ENCODE measurements at regions of chr13 and their contacts with region 1.

Region 1: DNA sequence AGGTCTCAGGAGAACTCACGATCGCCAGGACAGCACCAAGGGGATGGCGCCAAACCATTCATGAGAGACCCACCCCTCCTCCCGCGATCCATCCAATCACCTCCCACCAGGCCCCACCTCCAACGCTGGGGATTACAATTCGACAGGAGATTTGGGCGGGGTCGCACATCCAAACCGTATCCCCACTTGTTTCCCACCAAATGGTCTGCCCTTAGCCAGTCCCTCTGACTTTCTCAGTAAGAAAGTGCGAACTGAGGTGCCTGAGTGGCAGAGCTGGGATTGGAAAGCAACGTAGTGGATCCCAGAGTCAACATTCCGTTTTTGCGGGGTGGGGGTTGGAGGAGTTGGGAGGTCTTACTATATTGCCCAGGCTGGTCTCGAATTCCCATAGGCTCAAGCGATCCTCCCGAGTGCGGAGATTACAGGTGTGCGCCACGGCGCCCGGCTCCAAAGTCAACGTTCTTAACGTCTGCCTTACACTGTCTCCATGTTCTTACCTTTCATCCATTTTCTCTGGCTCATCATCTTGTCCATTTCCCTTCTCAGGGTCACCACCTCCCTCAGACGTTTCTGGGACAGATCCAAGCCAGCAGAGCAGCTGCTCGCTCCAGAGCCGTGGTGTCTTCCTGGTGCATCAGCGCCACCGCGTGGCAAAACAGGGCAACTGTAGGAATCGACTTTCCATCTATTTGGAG is 102.7 kb upstream of the ABCC4 start:
- DNase-seq: peak; percentile 79
- ATAC-seq: peak; percentile 92
- H3K4me3 Mint-ChIP-seq: peak overlapping the region; percentile 85
- H3K27ac Mint-ChIP-seq: peak overlapping the region; percentile 76
- H3K4me1 Mint-ChIP-seq: peaks cover 12% of the 10 kb centered on the region
- H3K27me3 Mint-ChIP-seq: peaks cover 7% of the 10 kb centered on the region

Region 2: GRCh38 chr13:94674609-94675348 is 729.2 kb before region 1 on chr13:
- CTCF ChIA-PET with region 1: interaction called, 14 read pairs
- POLR2A ChIA-PET with region 1: no interaction called
- DNase-seq: peak; percentile 67
- ATAC-seq: peak; percentile 58
- H3K4me3 Mint-ChIP-seq: no peak overlapping the region
- H3K27ac Mint-ChIP-seq: no peak overlapping the region
- H3K4me1 Mint-ChIP-seq: no peaks in the 10 kb centered on the region
- H3K27me3 Mint-ChIP-seq: peaks cover 23% of the 10 kb centered on the region

Region 3: GRCh38 chr13:95191821-95192563 is 212.0 kb before region 1 on chr13:
- CTCF ChIA-PET with region 1: interaction called, 254 read pairs
- POLR2A ChIA-PET with region 1: interaction called, 9 read pairs
- DNase-seq: peak; percentile 73
- ATAC-seq: peak; percentile 83
- H3K4me3 Mint-ChIP-seq: no peak overlapping the region
- H3K27ac Mint-ChIP-seq: no peak overlapping the region
- H3K4me1 Mint-ChIP-seq: peaks cover 15% of the 10 kb centered on the region
- H3K27me3 Mint-ChIP-seq: no peaks in the 10 kb centered on the region

Region 4: GRCh38 chr13:95301183-95301967 is 102.6 kb before region 1 on chr13 and contains the start of gene ABCC4:
- CTCF ChIA-PET with region 1: interaction called, 15 read pairs
- POLR2A ChIA-PET with region 1: no interaction called
- DNase-seq: peak; percentile 60
- ATAC-seq: peak; percentile 92
- H3K4me3 Mint-ChIP-seq: peak within 1 kb of the TSS; percentile 76
- H3K27ac Mint-ChIP-seq: peak within 1 kb of the TSS; percentile 40
- H3K4me1 Mint-ChIP-seq: peaks cover 23% of the 10 kb centered on the region
- H3K27me3 Mint-ChIP-seq: peaks cover 9% of the 10 kb centered on the region
- total RNA-seq, gene ABCC4: 5.7 to 6.1 TPM

Region 5: DNA sequence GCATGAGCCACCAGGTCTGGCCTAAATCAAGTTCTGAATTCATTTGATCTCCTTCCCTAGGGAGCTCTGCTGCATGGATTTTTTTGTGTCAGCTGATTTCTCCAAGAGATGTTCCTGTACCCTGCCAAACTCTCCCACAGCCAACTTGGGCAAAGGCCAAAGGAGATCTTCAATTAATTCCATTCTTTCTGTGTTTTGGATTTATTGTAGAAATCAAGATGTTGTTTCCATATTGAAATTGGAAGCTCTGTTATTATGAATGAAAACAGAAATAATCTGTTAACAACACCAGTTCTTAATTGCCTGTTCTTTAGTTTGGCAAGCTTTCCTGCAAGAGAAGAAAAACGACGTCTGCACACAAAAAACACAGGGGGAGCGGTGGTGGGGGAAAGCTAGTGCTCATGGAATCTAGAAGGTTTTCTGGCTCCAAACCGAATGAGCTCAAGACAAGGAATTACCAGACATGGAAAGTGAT is 16.2 kb before region 1 on chr13:
- CTCF ChIA-PET with region 1: interaction called, 25 read pairs
- POLR2A ChIA-PET with region 1: no interaction called
- DNase-seq: no peak
- ATAC-seq: no peak
- H3K4me3 Mint-ChIP-seq: no peak overlapping the region
- H3K27ac Mint-ChIP-seq: no peak overlapping the region
- H3K4me1 Mint-ChIP-seq: no peaks in the 10 kb centered on the region
- H3K27me3 Mint-ChIP-seq: peaks cover 22% of the 10 kb centered on the region

Region 6: GRCh38 chr13:95480131-95480545 is 76.2 kb after region 1 on chr13:
- CTCF ChIA-PET with region 1: interaction called, 34 read pairs
- POLR2A ChIA-PET with region 1: interaction called, 3 read pairs
- DNase-seq: no peak
- ATAC-seq: no peak
- H3K4me3 Mint-ChIP-seq: no peak overlapping the region
- H3K27ac Mint-ChIP-seq: no peak overlapping the region
- H3K4me1 Mint-ChIP-seq: peaks cover 18% of the 10 kb centered on the region
- H3K27me3 Mint-ChIP-seq: no peaks in the 10 kb centered on the region

Measured in activated CD8-positive, alpha-beta T cell treated with anti-CD3 and anti-CD28 coated beads, Interleukin-2, amount 10 ng/mL, durations not matched to agents 7 days and 5 days (primary cell).